ENCODE measurements at regions of chr1 and their contacts with region 1.

Region 1: GRCh38 chr1:34786521-34787325 is 5.7 kb downstream of the GJB3 start:
- DNase-seq: peak in 1 of 2 experiments; percentile 73
- H3K4me3 ChIP-seq: no peak overlapping the region
- H3K27ac ChIP-seq: no peak overlapping the region
- H3K4me1 ChIP-seq: peaks cover 0 to 9% (median 4%) of the 10 kb centered on the region in 4 experiments; a peak in 4 of 7 replicates
- H3K27me3 ChIP-seq: peaks cover 0 to 8% (median 4%) of the 10 kb centered on the region in 4 experiments; a peak in 5 of 7 replicates
- CTCF ChIP-seq: peak; percentile 90 to 97 (median 93)
- EP300 ChIP-seq: no peak
- POLR2A ChIP-seq: no peak
- RAD21 ChIP-seq: peak; percentile 93

Region 2: DNA sequence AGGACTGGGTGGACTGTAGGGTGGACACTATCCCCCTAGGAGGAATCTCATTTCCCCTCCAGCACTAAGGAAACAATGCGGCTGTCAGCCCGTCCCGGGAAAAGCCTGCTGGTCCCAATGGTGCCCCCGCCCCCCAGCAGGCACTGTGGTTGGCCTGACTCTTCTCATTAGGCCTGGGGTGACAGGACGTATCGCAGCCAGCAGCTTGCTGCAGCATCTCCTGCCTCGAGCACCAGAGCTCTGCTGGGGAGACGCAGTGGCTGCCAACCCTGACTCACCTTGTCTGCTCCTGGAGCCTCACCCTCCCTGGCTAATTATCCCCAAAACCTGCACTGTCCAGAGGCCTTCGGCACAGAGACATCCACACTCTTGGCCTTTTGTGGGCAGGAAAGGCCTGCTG is 147.0 kb before region 1 on chr1:
- CTCF ChIA-PET with region 1: no interaction called
- POLR2A ChIA-PET with region 1: no interaction called
- DNase-seq: no peak
- H3K4me3 ChIP-seq: no peak overlapping the region
- H3K27ac ChIP-seq: no peak overlapping the region
- H3K4me1 ChIP-seq: peaks cover 0 to 6% (median 1%) of the 10 kb centered on the region in 4 experiments; a peak in 3 of 7 replicates
- H3K27me3 ChIP-seq: no peaks in the 10 kb centered on the region
- CTCF ChIP-seq: no peak
- EP300 ChIP-seq: no peak
- POLR2A ChIP-seq: no peak
- RAD21 ChIP-seq: no peak

Region 3: GRCh38 chr1:34663031-34663430 is 123.7 kb before region 1 on chr1:
- CTCF ChIA-PET with region 1: no interaction called
- POLR2A ChIA-PET with region 1: no interaction called
- DNase-seq: no peak
- H3K4me3 ChIP-seq: no peak overlapping the region
- H3K27ac ChIP-seq: no peak overlapping the region
- H3K4me1 ChIP-seq: no peaks in the 10 kb centered on the region
- H3K27me3 ChIP-seq: no peaks in the 10 kb centered on the region
- CTCF ChIP-seq: no peak
- EP300 ChIP-seq: no peak
- POLR2A ChIP-seq: no peak
- RAD21 ChIP-seq: no peak

Region 4: DNA sequence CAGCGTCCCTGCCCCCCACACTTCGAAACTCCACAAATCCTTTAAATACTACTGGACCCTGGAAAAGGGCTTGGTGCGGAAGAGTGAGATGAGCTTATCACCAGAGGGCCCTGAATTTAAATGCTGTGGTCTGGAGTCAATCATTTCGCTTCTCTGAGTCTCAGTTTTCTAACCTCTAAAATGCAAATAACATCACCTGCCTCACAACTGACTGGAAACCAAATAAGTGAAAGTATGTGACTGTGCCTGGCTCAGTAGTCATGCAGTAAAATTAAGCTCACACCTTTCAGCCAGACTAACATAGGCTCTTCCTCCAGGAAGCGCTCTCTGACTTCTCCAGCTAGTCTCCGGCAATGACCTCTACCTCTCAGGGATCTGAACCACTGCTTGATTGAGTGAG is 10.3 kb after region 1 on chr1:
- CTCF ChIA-PET with region 1: interaction called, 37 read pairs
- POLR2A ChIA-PET with region 1: no interaction called
- DNase-seq: no peak
- H3K4me3 ChIP-seq: no peak overlapping the region
- H3K27ac ChIP-seq: no peak overlapping the region
- H3K4me1 ChIP-seq: peaks cover 0 to 12% (median 7%) of the 10 kb centered on the region in 4 experiments; a peak in 4 of 7 replicates
- H3K27me3 ChIP-seq: peaks cover 0 to 11% (median 8%) of the 10 kb centered on the region in 4 experiments; a peak in 4 of 7 replicates
- CTCF ChIP-seq: peak in 1 of 3 experiments; percentile 5; a peak in 2 of 4 replicates
- EP300 ChIP-seq: no peak
- POLR2A ChIP-seq: no peak
- RAD21 ChIP-seq: peak in 1 of 2 experiments; percentile 24; a peak in 1 of 4 replicates

Region 5: DNA sequence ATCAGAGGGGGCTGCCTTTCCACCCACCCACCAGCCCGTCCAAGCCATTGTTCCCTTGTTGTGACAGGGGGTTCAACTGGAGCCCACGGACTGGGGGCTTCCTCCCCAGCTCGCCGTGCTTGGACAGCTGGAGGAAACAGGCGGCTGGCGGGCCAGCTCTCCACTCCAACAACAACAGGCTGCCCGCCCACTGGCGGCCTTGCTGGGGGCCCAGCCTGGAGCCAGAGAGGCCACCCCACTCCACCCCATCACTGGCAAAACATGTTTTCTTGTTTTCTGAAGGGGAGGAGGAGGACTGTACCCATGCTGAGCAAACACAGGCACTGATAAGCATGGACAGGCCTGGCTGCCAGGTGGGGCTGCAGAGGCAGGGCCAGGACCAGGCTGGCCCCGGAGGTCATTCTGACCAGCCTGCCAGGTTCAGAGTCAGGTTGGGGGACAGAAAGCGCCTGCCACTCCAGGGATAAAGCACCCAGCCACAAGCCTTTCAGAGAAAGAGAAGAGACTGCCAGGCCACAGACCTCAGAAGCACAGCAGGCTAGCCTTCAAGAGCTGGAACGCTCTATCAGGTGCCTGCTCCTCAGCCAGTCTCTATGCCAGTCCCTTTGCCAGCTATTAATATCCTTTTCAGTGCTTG is 38.9 kb after region 1 on chr1:
- CTCF ChIA-PET with region 1: interaction called, 21 read pairs
- POLR2A ChIA-PET with region 1: no interaction called
- DNase-seq: peak in 1 of 2 experiments; percentile 40
- H3K4me3 ChIP-seq: no peak overlapping the region
- H3K27ac ChIP-seq: no peak overlapping the region
- H3K4me1 ChIP-seq: no peaks in the 10 kb centered on the region; a peak in 2 of 7 replicates
- H3K27me3 ChIP-seq: no peaks in the 10 kb centered on the region
- CTCF ChIP-seq: no peak
- EP300 ChIP-seq: no peak
- POLR2A ChIP-seq: no peak
- RAD21 ChIP-seq: no peak

Region 6: GRCh38 chr1:34859446-34860200 is 72.9 kb after region 1 on chr1 and contains the start of gene SMIM12:
- CTCF ChIA-PET with region 1: interaction called, 34 read pairs
- POLR2A ChIA-PET with region 1: interaction called, 6 read pairs
- DNase-seq: peak; percentile 65 to 88
- H3K4me3 ChIP-seq: peak within 1 kb of the TSS; percentile 75 to 100 (median 94)
- H3K27ac ChIP-seq: peak within 1 kb of the TSS; percentile 39; the same call in 1 of the 2 replicates
- H3K4me1 ChIP-seq: peaks cover 0 to 7% (median 0%) of the 10 kb centered on the region in 4 experiments; a peak in 2 of 7 replicates
- H3K27me3 ChIP-seq: peaks cover 0 to 2% (median 0%) of the 10 kb centered on the region in 4 experiments; a peak in 1 of 7 replicates
- CTCF ChIP-seq: peak; percentile 74 to 89 (median 79)
- EP300 ChIP-seq: 0 out of 3 replicates have a peak, but pooled peaks of 1 of the 2 experiments have one; percentile 43
- POLR2A ChIP-seq: peak; percentile 70 to 92
- RAD21 ChIP-seq: peak; percentile 23 to 36; a peak in 3 of 4 replicates
- total RNA-seq, gene SMIM12: 40.9 and 42.6 TPM in 2 replicates

Region 7: GRCh38 chr1:34865981-34866761 is 79.4 kb after region 1 on chr1:
- CTCF ChIA-PET with region 1: interaction called, 34 read pairs
- POLR2A ChIA-PET with region 1: no interaction called
- DNase-seq: peak; percentile 68 to 98
- H3K4me3 ChIP-seq: peak overlapping the region; percentile 33 to 69 (median 62)
- H3K27ac ChIP-seq: peak overlapping the region; percentile 17; the same call in 1 of the 2 replicates
- H3K4me1 ChIP-seq: peaks cover 0 to 7% (median 3%) of the 10 kb centered on the region in 4 experiments; a peak in 4 of 7 replicates
- H3K27me3 ChIP-seq: peaks cover 0 to 11% (median 4%) of the 10 kb centered on the region in 4 experiments; a peak in 2 of 7 replicates
- CTCF ChIP-seq: peak; percentile 77 to 89 (median 89)
- EP300 ChIP-seq: peak in 1 of 2 experiments; percentile 34; a peak in 1 of 3 replicates
- POLR2A ChIP-seq: peak in 1 of 2 experiments; percentile 54; a peak in 2 of 3 replicates
- RAD21 ChIP-seq: peak; percentile 46 to 61